ENCODE measurements at regions of chrX and their contacts with region 1.

Region 1: GRCh38 chrX:118682258-118683014 is 45.0 kb upstream of the IL13RA1 start:
- DNase-seq: no peak
- ATAC-seq: no peak
- H3K4me3 ChIP-seq: no peak overlapping the region
- H3K4me3 Mint-ChIP-seq: no peak overlapping the region
- H3K27ac ChIP-seq: no peak overlapping the region
- H3K27ac Mint-ChIP-seq: no peak overlapping the region
- H3K4me1 ChIP-seq: no peaks in the 10 kb centered on the region
- H3K4me1 Mint-ChIP-seq: no peaks in the 10 kb centered on the region
- H3K27me3 ChIP-seq: no peaks in the 10 kb centered on the region
- H3K27me3 Mint-ChIP-seq: no peaks in the 10 kb centered on the region

Region 2: GRCh38 chrX:118660085-118660484 is 22.4 kb before region 1 on chrX:
- CTCF ChIA-PET with region 1: no interaction called
- POLR2A ChIA-PET with region 1: interaction called in 1 of 2 experiments, 13 read pairs
- DNase-seq: no peak
- ATAC-seq: no peak
- H3K4me3 ChIP-seq: no peak overlapping the region
- H3K4me3 Mint-ChIP-seq: no peak overlapping the region
- H3K27ac ChIP-seq: no peak overlapping the region
- H3K27ac Mint-ChIP-seq: no peak overlapping the region
- H3K4me1 ChIP-seq: no peaks in the 10 kb centered on the region
- H3K4me1 Mint-ChIP-seq: no peaks in the 10 kb centered on the region
- H3K27me3 ChIP-seq: no peaks in the 10 kb centered on the region
- H3K27me3 Mint-ChIP-seq: peaks cover 0 to 11% of the 10 kb centered on the region in 2 donors

Region 3: DNA sequence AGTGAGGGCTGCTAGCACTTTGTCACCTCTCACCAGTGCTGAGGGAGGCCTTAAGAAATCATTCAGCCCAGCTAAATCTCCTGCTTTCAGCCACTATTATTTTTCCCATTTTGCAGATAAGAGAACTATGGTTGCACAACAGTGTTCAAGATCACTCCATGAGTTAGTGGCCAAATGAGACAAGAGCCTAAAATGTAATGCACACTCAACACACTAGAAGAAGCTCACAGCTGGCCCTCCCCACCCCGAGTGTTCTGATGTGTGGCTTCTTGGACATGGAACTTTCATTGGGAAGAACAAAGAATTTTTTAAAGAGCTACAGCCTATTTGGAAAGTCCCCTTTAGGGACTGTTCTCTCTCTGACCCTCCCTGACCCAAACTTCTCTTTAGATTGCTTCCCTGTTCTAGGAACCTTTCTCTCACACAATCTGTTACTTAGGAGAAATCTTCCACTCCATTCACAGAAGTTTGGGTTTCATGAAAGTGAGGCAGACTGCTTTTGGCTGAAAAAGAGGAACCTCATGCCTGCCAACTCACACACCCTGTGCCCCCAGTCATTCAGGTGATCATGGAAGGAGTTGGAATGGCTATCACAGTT is 346.4 kb after region 1 on chrX:
- CTCF ChIA-PET with region 1: interaction called in 1 of 2 experiments, 13 read pairs
- POLR2A ChIA-PET with region 1: no interaction called
- DNase-seq: no peak
- ATAC-seq: no peak
- H3K4me3 ChIP-seq: no peak overlapping the region
- H3K4me3 Mint-ChIP-seq: no peak overlapping the region
- H3K27ac ChIP-seq: no peak overlapping the region
- H3K27ac Mint-ChIP-seq: no peak overlapping the region
- H3K4me1 ChIP-seq: no peaks in the 10 kb centered on the region
- H3K4me1 Mint-ChIP-seq: no peaks in the 10 kb centered on the region
- H3K27me3 ChIP-seq: no peaks in the 10 kb centered on the region
- H3K27me3 Mint-ChIP-seq: peaks cover 0 to 16% of the 10 kb centered on the region in 2 donors

Measured in T-cell (primary cell).